ENCODE measurements at regions of chr12 and their contacts with region 1.

Region 1: GRCh38 chr12:31896514-31897039 is 62.6 kb upstream of the RESF1 start:
- DNase-seq: peak; percentile 92
- H3K4me3 Mint-ChIP-seq: peak overlapping the region; percentile 52
- H3K27ac Mint-ChIP-seq: peak overlapping the region; percentile 95
- H3K4me1 Mint-ChIP-seq: peaks cover 54% of the 10 kb centered on the region
- H3K27me3 Mint-ChIP-seq: no peaks in the 10 kb centered on the region

Region 2: DNA sequence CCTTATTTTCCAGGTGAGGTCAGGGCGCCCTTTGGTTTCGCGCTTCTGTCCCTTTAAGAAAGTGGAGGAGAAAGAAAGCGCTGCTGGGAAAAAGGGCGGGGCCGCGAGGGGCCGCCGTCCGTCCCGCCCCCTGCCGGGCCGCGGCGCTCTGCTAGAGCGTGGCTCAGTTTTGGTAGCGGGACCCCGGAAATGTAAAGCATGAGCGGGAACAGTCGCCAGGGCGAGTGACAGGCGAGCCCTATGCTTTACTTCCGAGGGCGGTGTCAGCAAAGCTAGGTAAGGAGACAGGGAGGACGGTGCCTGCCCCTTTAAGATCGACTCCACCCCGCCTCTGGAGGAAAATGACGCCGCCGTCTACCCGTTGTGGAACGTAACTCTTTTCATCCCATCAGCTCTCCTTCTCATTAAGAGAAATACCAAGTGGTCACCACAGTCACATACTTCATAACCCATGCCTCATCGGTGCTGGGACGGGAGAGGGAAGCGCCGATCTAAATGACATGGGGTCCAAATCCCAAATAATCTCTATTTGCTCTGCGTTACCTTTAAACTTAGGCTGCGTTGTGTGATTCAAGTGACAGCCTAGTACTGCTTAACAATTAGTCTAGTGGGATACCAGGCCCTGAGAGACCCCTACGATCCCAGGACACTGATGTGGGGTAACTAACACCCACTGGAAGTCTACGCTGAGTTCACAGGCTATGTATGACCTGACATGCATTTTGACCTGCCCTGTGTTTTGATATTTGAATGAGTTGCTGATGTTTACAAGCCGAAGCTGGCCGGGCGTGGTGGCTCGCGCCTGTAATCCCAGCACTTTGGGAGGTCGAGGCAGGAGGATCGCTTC is 237.3 kb before region 1 on chr12 and contains the start of gene ETFBKMT:
- CTCF ChIA-PET with region 1: no interaction called
- POLR2A ChIA-PET with region 1: no interaction called
- intact Hi-C with region 1: loop called (anchors 1 kb)
- DNase-seq: peak; percentile 97
- H3K4me3 Mint-ChIP-seq: peak within 1 kb of the TSS; percentile 96
- H3K27ac Mint-ChIP-seq: peak within 1 kb of the TSS; percentile 95
- H3K4me1 Mint-ChIP-seq: peaks cover 7% of the 10 kb centered on the region
- H3K27me3 Mint-ChIP-seq: no peaks in the 10 kb centered on the region
- total RNA-seq, gene ETFBKMT: 1.1 to 1.3 TPM

Region 3: DNA sequence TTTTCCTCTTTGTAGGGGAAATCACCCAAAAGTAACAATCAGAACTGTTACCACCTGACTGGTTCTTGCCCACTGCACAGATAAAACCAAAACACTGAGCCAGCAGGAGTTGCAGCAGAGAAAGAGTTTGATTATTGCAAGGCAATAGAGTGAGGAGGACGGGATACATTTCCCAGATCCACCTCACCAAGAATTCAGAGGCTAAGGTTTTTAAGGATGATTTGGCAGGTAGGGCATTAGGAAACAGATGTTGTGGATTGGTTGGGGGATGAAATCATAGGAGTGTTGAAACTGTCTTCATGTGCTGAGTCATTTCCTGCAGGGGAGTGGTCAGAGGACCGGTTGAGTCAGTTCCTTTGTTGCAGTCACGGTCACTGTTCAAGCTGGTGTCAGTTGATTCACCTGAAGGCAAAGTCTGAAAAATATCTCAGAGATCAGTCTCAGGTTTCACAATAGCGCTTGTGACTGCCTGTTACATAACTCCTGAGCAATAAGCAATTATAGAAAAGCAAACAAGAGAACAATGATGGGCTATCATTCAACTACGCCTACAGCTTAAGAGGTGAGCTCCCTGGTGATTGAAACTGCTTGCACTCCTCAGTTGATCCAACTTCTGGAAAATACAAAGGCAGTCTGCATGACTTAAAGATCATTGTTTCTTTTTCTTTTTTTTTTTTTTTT is 147.4 kb before region 1 on chr12:
- CTCF ChIA-PET with region 1: no interaction called
- POLR2A ChIA-PET with region 1: interaction called, 3 read pairs
- intact Hi-C with region 1: loop called (anchors 1 kb)
- DNase-seq: peak; percentile 87
- H3K4me3 Mint-ChIP-seq: no peak overlapping the region
- H3K27ac Mint-ChIP-seq: peak overlapping the region; percentile 63
- H3K4me1 Mint-ChIP-seq: peaks cover 57% of the 10 kb centered on the region
- H3K27me3 Mint-ChIP-seq: no peaks in the 10 kb centered on the region

Region 4: DNA sequence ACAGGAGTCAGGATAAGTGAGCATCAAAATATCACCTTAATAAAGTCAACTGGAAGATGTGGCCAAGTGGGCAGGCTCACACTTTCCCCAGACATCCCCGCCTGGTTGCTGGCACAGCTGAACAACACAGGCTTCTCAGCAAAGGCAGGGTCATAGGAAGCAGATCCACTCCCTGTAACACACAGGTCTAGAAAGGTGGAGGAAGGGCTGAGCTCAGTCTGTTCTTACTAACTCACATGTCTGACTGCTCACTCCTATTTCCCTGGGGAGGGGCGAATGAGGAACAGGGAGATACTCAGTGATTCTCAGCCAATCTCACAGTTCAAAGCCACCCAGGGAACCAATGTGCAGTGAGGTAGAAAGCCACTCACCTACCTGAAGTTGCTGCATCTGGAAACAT is 122.7 kb before region 1 on chr12:
- CTCF ChIA-PET with region 1: no interaction called
- POLR2A ChIA-PET with region 1: no interaction called
- intact Hi-C with region 1: no loop called
- DNase-seq: peak; percentile 12
- H3K4me3 Mint-ChIP-seq: no peak overlapping the region
- H3K27ac Mint-ChIP-seq: no peak overlapping the region
- H3K4me1 Mint-ChIP-seq: peaks cover 12% of the 10 kb centered on the region
- H3K27me3 Mint-ChIP-seq: no peaks in the 10 kb centered on the region

Region 5: GRCh38 chr12:31797230-31797872 is 99.2 kb before region 1 on chr12:
- CTCF ChIA-PET with region 1: no interaction called
- POLR2A ChIA-PET with region 1: no interaction called
- intact Hi-C with region 1: no loop called
- DNase-seq: peak; percentile 30
- H3K4me3 Mint-ChIP-seq: peak overlapping the region; percentile 4
- H3K27ac Mint-ChIP-seq: peak overlapping the region; percentile 57
- H3K4me1 Mint-ChIP-seq: peaks cover 24% of the 10 kb centered on the region
- H3K27me3 Mint-ChIP-seq: no peaks in the 10 kb centered on the region

Region 6: GRCh38 chr12:31861360-31861759 is 35.2 kb before region 1 on chr12:
- CTCF ChIA-PET with region 1: no interaction called
- POLR2A ChIA-PET with region 1: no interaction called
- intact Hi-C with region 1: loop called (anchors 5 kb)
- DNase-seq: no peak
- H3K4me3 Mint-ChIP-seq: no peak overlapping the region
- H3K27ac Mint-ChIP-seq: peak overlapping the region; percentile 5
- H3K4me1 Mint-ChIP-seq: peaks cover 21% of the 10 kb centered on the region
- H3K27me3 Mint-ChIP-seq: no peaks in the 10 kb centered on the region

Region 7: GRCh38 chr12:31951008-31951407 is 54.4 kb after region 1 on chr12:
- CTCF ChIA-PET with region 1: no interaction called
- POLR2A ChIA-PET with region 1: no interaction called
- intact Hi-C with region 1: loop called (anchors 2 kb)
- DNase-seq: peak; percentile 33
- H3K4me3 Mint-ChIP-seq: no peak overlapping the region
- H3K27ac Mint-ChIP-seq: peak overlapping the region; percentile 8
- H3K4me1 Mint-ChIP-seq: peaks cover 37% of the 10 kb centered on the region
- H3K27me3 Mint-ChIP-seq: no peaks in the 10 kb centered on the region

Region 8: GRCh38 chr12:32025906-32026305 is 129.3 kb after region 1 on chr12:
- CTCF ChIA-PET with region 1: no interaction called
- POLR2A ChIA-PET with region 1: no interaction called
- intact Hi-C with region 1: loop called (anchors 1 kb)
- DNase-seq: peak; percentile 80
- H3K4me3 Mint-ChIP-seq: peak overlapping the region; percentile 42
- H3K27ac Mint-ChIP-seq: peak overlapping the region; percentile 74
- H3K4me1 Mint-ChIP-seq: peaks cover 24% of the 10 kb centered on the region
- H3K27me3 Mint-ChIP-seq: no peaks in the 10 kb centered on the region

Measured in activated CD4-positive, alpha-beta memory T cell treated with anti-CD3 and anti-CD28 coated beads for 36 hours (primary cell).